Mammary epithelial cell (primary cell): ENCODE measurements at regions of chr10 and their contacts with region 1.

Region 1: GRCh38 chr10:114694752-114695151 is 36.7 kb upstream of the ABLIM1 start:
- DNase-seq: no peak
- H3K4me3 ChIP-seq: no peak overlapping the region
- H3K27ac ChIP-seq: no peak overlapping the region
- H3K4me1 ChIP-seq: peaks cover 25% of the 10 kb centered on the region
- H3K27me3 ChIP-seq: no peaks in the 10 kb centered on the region
- CTCF ChIP-seq: peak; percentile 52 to 66

Region 2: DNA sequence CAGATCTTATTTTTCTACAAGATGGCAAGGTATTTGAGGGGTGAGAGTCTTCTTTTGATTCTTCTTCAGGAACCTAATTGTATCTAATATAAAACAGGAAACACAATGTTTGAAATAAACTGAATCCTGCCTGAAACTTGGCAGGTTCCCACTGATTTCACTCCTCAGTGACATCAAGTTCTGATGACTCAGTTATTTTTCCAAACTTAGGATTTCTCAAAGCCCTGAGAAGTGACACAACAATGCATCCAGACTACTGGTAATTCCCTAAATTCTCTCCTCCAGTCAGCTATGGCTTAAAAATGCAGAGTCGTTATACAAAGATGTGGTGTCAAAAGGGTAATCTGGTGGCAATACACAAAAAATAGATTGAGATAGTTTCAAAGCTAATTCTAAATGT is 117.6 kb before region 1 on chr10:
- CTCF ChIA-PET with region 1: no interaction called
- dilution Hi-C with region 1: no loop called
- in situ Hi-C with region 1: loop called in 1 of 2 experiments (anchors 10 kb)
- intact Hi-C with region 1: no loop called
- DNase-seq: peak; percentile 74
- H3K4me3 ChIP-seq: no peak overlapping the region
- H3K27ac ChIP-seq: no peak overlapping the region
- H3K4me1 ChIP-seq: peaks cover 26% of the 10 kb centered on the region
- H3K27me3 ChIP-seq: no peaks in the 10 kb centered on the region
- CTCF ChIP-seq: no peak

Region 3: DNA sequence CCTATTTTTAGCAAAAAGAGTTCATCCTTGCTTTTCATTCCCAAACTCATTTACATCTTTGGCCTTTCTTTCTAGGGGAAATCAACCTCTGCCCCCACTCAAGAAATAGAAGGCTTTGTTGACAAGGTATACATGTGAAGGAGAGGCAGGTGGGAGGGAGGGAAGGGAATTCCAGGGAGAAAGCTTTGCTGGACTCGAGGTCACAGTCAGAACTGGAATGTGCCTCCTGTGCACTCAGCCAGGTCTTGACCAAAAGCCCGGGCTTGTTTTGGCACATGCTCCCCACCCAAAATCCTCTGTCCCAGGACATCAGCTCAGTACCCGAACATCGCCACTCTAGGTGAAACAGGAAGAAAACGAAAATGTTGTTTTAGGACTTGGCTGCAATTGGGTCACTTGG is 98.0 kb before region 1 on chr10:
- CTCF ChIA-PET with region 1: no interaction called
- dilution Hi-C with region 1: loop called (anchors 5 kb)
- in situ Hi-C with region 1: no loop called
- intact Hi-C with region 1: no loop called
- DNase-seq: no peak
- H3K4me3 ChIP-seq: no peak overlapping the region
- H3K27ac ChIP-seq: no peak overlapping the region
- H3K4me1 ChIP-seq: no peaks in the 10 kb centered on the region
- H3K27me3 ChIP-seq: no peaks in the 10 kb centered on the region
- CTCF ChIP-seq: no peak

Region 4: DNA sequence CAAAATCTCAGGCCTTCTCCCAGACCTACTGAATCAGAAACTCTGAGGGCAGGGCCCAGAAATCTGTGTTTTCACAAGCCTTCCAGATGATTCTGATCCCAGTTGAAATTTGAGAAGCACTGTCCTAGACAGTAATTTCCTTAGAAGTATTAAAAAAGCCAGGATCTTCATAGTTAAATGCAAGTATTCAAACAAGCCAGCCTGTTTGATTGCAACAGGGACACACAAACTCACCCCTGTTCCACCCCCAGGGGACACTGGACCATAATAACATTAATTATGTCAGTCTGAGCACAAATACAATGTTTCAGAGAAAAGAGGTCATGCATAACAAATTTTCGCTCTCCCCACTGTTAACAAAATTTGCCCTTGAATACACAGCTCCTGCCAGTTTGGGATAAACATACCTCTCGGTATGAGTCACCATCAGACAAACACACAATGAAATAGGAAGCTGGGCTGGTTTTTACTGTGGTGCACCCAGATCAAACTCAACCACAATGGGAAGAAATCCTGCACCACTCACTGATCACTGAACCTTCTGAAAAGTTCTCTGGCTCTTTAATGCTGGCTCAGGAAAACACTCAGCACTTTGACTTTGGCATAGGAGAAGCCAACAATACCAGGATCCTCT is 71.0 kb before region 1 on chr10:
- CTCF ChIA-PET with region 1: no interaction called
- dilution Hi-C with region 1: no loop called
- in situ Hi-C with region 1: no loop called
- intact Hi-C with region 1: no loop called
- DNase-seq: peak; percentile 84
- H3K4me3 ChIP-seq: no peak overlapping the region
- H3K27ac ChIP-seq: peak overlapping the region; percentile 18
- H3K4me1 ChIP-seq: peaks cover 52% of the 10 kb centered on the region
- H3K27me3 ChIP-seq: no peaks in the 10 kb centered on the region
- CTCF ChIP-seq: no peak

Region 5: DNA sequence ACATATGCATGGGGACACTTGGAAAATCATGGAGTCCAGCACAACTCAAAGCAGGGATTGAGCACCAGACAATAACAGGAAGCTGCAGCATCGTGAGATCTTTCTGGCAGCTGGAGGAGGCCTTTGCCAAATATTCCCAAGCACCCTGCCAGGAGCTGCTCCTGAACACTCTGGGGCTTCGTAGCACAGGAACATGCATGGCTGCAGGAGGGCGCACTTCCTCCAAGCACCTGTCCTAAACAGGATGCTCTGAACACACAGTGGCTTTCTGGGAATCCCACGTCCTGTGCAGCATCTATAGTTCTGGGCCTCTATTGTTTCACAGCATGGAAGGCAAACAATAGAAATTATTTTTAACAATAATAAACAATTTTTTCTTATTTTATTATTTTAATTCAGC is 40.8 kb before region 1 on chr10:
- CTCF ChIA-PET with region 1: no interaction called
- dilution Hi-C with region 1: loop called (anchors 5 kb)
- in situ Hi-C with region 1: no loop called
- intact Hi-C with region 1: no loop called
- DNase-seq: no peak
- H3K4me3 ChIP-seq: no peak overlapping the region
- H3K27ac ChIP-seq: no peak overlapping the region
- H3K4me1 ChIP-seq: peaks cover 8% of the 10 kb centered on the region
- H3K27me3 ChIP-seq: no peaks in the 10 kb centered on the region
- CTCF ChIP-seq: no peak

Region 6: DNA sequence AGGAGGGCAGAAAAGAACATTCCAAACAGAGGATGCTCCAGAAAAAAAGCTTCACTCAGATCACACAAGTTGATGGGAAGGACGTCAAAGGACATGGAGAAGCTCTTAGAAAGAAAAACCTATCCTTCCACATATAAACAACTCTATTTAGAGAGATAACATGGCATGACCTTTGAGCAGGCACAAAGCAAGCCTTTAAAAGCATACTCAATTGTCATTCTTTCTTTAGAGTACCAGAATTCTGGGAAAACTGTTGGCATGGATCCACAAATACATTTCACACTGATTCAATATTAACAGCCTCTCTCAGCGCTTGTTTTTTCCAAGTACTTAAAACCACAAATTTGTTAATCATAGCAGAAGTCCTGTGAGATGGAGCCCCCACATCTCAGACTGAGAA is 29.3 kb before region 1 on chr10:
- CTCF ChIA-PET with region 1: no interaction called
- dilution Hi-C with region 1: no loop called
- in situ Hi-C with region 1: no loop called
- intact Hi-C with region 1: no loop called
- DNase-seq: no peak
- H3K4me3 ChIP-seq: no peak overlapping the region
- H3K27ac ChIP-seq: no peak overlapping the region
- H3K4me1 ChIP-seq: no peaks in the 10 kb centered on the region
- H3K27me3 ChIP-seq: peaks cover 4% of the 10 kb centered on the region
- CTCF ChIP-seq: no peak

Region 7: DNA sequence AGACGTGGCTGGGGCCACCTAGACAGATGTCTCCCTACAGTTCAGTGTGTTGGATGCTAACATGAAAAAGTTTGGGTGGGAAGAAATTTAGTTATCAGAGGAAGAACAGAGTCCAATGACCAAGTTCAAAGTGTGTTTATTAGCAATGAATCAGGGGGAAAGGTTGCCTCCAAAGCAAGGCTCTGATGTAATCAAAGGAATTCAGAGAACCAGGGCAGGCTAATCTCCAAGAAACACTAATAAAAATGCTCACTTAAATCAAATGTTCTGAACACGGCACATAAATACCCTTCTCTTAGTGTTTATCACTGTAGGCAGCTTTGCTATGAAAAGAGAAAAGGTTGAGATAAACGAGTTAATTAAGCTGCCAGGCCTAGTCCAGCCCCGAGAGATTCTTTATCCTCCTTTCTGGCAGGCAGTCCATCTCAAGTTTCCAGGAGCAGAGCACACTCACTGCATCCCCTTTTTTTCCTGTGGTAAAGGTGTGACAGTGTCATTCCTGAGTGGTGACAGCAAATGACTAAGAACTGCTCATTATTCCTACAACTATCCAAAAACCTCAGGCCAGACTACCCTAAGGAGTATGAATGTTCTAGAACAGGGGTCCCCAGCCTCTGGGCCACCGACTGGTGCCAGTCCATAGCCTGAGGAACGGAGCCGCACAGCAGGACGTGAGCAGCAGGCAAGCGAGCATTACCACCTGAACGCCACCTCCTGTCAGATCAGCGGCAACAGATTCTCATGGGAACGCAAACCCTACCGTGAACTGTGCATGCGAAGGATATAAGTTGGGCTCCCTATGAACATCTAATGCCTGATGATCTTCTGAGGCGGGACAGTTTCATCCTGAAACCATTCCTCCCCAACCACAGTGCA is 59.9 kb after region 1 on chr10:
- CTCF ChIA-PET with region 1: no interaction called
- dilution Hi-C with region 1: loop called (anchors 5 kb)
- in situ Hi-C with region 1: no loop called
- intact Hi-C with region 1: no loop called
- DNase-seq: peak; percentile 60
- H3K4me3 ChIP-seq: no peak overlapping the region
- H3K27ac ChIP-seq: no peak overlapping the region
- H3K4me1 ChIP-seq: peaks cover 26% of the 10 kb centered on the region
- H3K27me3 ChIP-seq: no peaks in the 10 kb centered on the region
- CTCF ChIP-seq: no peak